HepG2 (cell line): ENCODE measurements at regions of chr5 and their contacts with region 1.

Region 1: GRCh38 chr5:43019614-43020293 is 20.4 kb downstream of the ANXA2R start:
- DNase-seq: peak; percentile 88
- ATAC-seq: peak; percentile 83
- H3K4me3 ChIP-seq: peak overlapping the region; percentile 69 to 86 (median 82)
- H3K27ac ChIP-seq: peak overlapping the region; percentile 92
- H3K4me1 ChIP-seq: peaks cover 39% of the 10 kb centered on the region
- H3K27me3 ChIP-seq: no peaks in the 10 kb centered on the region; a peak in 1 of 5 replicates
- CTCF ChIP-seq: peak; percentile 44
- EP300 ChIP-seq: no peak
- POLR2A ChIP-seq: no peak
- RAD21 ChIP-seq: no peak

Region 2: GRCh38 chr5:42994246-42995151 is 25.3 kb before region 1 on chr5:
- CTCF ChIA-PET with region 1: interaction called, 16 read pairs
- POLR2A ChIA-PET with region 1: interaction called, 10 read pairs
- in situ Hi-C with region 1: no loop called
- intact Hi-C with region 1: no loop called
- DNase-seq: peak; percentile 81
- ATAC-seq: peak; percentile 86
- H3K4me3 ChIP-seq: peak overlapping the region; percentile 75 to 93 (median 77)
- H3K27ac ChIP-seq: peak overlapping the region; percentile 64
- H3K4me1 ChIP-seq: peaks cover 25% of the 10 kb centered on the region
- H3K27me3 ChIP-seq: no peaks in the 10 kb centered on the region
- CTCF ChIP-seq: peak; percentile 87
- EP300 ChIP-seq: no peak
- POLR2A ChIP-seq: peak in 1 of 2 experiments; percentile 43; a peak in 1 of 4 replicates
- RAD21 ChIP-seq: 0 out of 2 replicates have a peak, but pooled peaks have one; percentile 40

Region 3: GRCh38 chr5:43000111-43000845 is 19.5 kb before region 1 on chr5:
- CTCF ChIA-PET with region 1: interaction called, 16 read pairs
- POLR2A ChIA-PET with region 1: interaction called, 10 read pairs
- in situ Hi-C with region 1: no loop called
- intact Hi-C with region 1: no loop called
- DNase-seq: no peak
- ATAC-seq: peak; percentile 90
- H3K4me3 ChIP-seq: peak overlapping the region; percentile 52 to 67 (median 60)
- H3K27ac ChIP-seq: no peak overlapping the region
- H3K4me1 ChIP-seq: peaks cover 13% of the 10 kb centered on the region
- H3K27me3 ChIP-seq: no peaks in the 10 kb centered on the region
- CTCF ChIP-seq: peak; percentile 14; the same call in 1 of the 2 replicates
- EP300 ChIP-seq: no peak
- POLR2A ChIP-seq: no peak
- RAD21 ChIP-seq: no peak

Region 4: GRCh38 chr5:43008369-43009153 is 11.2 kb before region 1 on chr5:
- CTCF ChIA-PET with region 1: interaction called, 14 read pairs
- POLR2A ChIA-PET with region 1: interaction called, 72 read pairs
- in situ Hi-C with region 1: no loop called
- intact Hi-C with region 1: loop called (anchors 1 kb)
- DNase-seq: peak; percentile 89
- ATAC-seq: peak; percentile 71
- H3K4me3 ChIP-seq: peak overlapping the region; percentile 73 to 94 (median 78)
- H3K27ac ChIP-seq: peak overlapping the region; percentile 84
- H3K4me1 ChIP-seq: peaks cover 12% of the 10 kb centered on the region
- H3K27me3 ChIP-seq: no peaks in the 10 kb centered on the region; a peak in 1 of 5 replicates
- CTCF ChIP-seq: peak; percentile 76
- EP300 ChIP-seq: peak in 1 of 2 experiments; percentile 53; a peak in 1 of 4 replicates
- POLR2A ChIP-seq: peak; percentile 45 to 60; a peak in 3 of 4 replicates
- RAD21 ChIP-seq: peak; percentile 14; the same call in 1 of the 2 replicates

Region 5: GRCh38 chr5:43066799-43067741 is 47.3 kb after region 1 on chr5:
- CTCF ChIA-PET with region 1: interaction called, 8 read pairs
- POLR2A ChIA-PET with region 1: interaction called, 49 read pairs
- in situ Hi-C with region 1: no loop called
- intact Hi-C with region 1: loop called (anchors 1 kb)
- DNase-seq: peak; percentile 87
- ATAC-seq: peak; percentile 83
- H3K4me3 ChIP-seq: peak overlapping the region; percentile 82 to 92 (median 83)
- H3K27ac ChIP-seq: peak overlapping the region; percentile 98
- H3K4me1 ChIP-seq: peaks cover 35% of the 10 kb centered on the region
- H3K27me3 ChIP-seq: no peaks in the 10 kb centered on the region; a peak in 1 of 5 replicates
- CTCF ChIP-seq: peak; percentile 21; the same call in 1 of the 2 replicates
- EP300 ChIP-seq: peak; percentile 38 to 84; a peak in 3 of 4 replicates
- POLR2A ChIP-seq: peak; percentile 15 to 35; a peak in 3 of 4 replicates
- RAD21 ChIP-seq: no peak